ENCODE measurements at regions of chr16 and their contacts with region 1.

Region 1: GRCh38 chr16:25111403-25112166 is at the start of gene LCMT1:
- DNase-seq: peak; percentile 97
- ATAC-seq: peak; percentile 93
- H3K4me3 Mint-ChIP-seq: peak within 1 kb of the TSS; percentile 82
- H3K27ac Mint-ChIP-seq: peak within 1 kb of the TSS; percentile 97
- H3K4me1 Mint-ChIP-seq: peaks cover 54% of the 10 kb centered on the region
- H3K27me3 Mint-ChIP-seq: no peaks in the 10 kb centered on the region
- total RNA-seq, gene LCMT1: 38.9 to 44.6 TPM

Region 2: GRCh38 chr16:25051406-25052150 is 60.0 kb before region 1 on chr16:
- CTCF ChIA-PET with region 1: interaction called, 75 read pairs
- DNase-seq: no peak
- ATAC-seq: peak; percentile 13
- H3K4me3 Mint-ChIP-seq: peak overlapping the region; percentile 66
- H3K27ac Mint-ChIP-seq: peak overlapping the region; percentile 88
- H3K4me1 Mint-ChIP-seq: peaks cover 53% of the 10 kb centered on the region
- H3K27me3 Mint-ChIP-seq: no peaks in the 10 kb centered on the region

Region 3: DNA sequence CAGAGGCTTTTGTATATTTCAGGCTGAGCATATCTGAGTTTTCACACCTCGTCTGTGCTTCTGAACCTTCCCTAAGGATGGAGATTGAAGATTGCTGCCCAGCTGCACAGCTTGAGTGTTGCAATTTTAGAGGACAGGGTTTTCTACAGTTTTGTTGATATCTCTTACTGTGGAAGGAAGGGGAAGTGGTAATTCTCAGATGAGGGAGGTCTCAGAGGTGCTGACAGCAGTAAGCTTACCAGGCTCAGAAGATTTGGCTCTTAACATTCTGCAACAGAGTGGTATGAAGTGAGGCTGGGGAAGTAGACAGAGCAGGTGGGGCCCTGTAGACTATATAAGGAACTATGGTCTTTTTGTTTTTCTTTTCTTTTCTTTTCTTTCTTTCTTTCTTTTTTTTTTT is 50.7 kb before region 1 on chr16:
- CTCF ChIA-PET with region 1: interaction called, 75 read pairs
- DNase-seq: peak; percentile 60
- ATAC-seq: peak; percentile 98
- H3K4me3 Mint-ChIP-seq: peak overlapping the region; percentile 56
- H3K27ac Mint-ChIP-seq: peak overlapping the region; percentile 93
- H3K4me1 Mint-ChIP-seq: peaks cover 48% of the 10 kb centered on the region
- H3K27me3 Mint-ChIP-seq: no peaks in the 10 kb centered on the region

Region 4: GRCh38 chr16:25066747-25067631 is 44.6 kb before region 1 on chr16:
- CTCF ChIA-PET with region 1: interaction called, 75 read pairs
- DNase-seq: peak; percentile 90
- ATAC-seq: peak; percentile 97
- H3K4me3 Mint-ChIP-seq: peak overlapping the region; percentile 85
- H3K27ac Mint-ChIP-seq: peak overlapping the region; percentile 88
- H3K4me1 Mint-ChIP-seq: peaks cover 46% of the 10 kb centered on the region
- H3K27me3 Mint-ChIP-seq: no peaks in the 10 kb centered on the region